IMR-90 (cell line): ENCODE measurements at regions of chr16 and their contacts with region 1.

Region 1: DNA sequence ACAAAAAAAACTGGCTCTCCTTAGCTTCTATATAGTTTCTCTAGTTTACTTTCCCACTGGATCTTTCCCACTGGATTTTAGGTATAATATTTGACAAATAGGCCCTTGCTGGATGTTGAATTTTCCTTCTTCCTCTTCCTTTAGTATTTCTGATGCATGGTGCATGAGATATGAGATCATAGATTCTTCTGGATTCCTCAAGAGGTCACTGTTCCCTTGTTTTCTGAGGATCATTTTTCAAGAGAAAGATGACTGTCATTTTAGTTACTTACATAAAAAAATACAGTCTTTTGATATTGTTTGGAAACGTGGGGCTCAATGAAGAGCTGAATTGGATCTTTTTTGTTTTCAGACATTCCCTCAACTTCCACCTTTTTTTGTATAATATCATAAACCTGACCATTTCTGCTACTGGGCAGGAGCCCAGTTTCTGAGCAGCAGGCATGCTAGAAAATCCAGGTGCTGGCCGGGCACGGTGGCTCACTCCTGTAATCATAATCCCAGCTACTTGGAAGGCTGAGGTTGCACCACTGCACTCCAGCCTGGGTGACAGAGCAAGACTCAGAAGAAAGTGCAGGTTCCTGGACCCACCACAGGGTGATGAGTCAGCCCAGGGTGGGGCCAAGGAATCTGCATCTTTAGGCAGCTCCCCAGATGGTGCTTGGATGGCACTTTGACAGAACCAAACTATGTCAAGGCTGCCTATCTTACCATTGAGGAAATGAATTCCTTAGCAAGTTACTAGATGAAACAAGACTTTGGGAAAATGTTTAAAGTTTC is 70.3 kb downstream of the SDR42E1 start:
- DNase-seq: peak; percentile 64
- ATAC-seq: peak; percentile 61
- H3K4me3 ChIP-seq: no peak overlapping the region
- H3K27ac ChIP-seq: no peak overlapping the region
- H3K4me1 ChIP-seq: peaks cover 3% of the 10 kb centered on the region
- H3K27me3 ChIP-seq: peaks cover 13% of the 10 kb centered on the region
- CTCF ChIP-seq: peak; percentile 60
- POLR2A ChIP-seq: no peak
- RAD21 ChIP-seq: peak; percentile 65

Region 2: DNA sequence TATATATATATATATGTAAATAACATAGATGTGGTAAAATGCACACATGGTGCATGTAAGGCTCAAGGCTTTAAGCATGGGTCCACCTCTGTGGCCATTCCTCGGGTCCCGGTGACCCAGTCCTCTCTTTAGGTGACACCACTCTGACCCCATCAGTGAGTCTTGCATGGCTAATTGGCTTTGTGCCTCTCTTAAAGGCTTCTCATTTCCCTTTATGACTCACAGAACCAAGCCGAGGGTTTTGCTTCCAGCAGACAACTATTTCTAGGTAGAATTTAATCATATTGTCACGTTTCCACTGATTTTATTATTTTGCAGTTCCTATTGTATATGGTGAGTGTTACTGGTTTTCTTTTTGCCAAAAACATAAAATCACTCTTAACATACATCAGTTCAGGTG is 102.2 kb before region 1 on chr16:
- CTCF ChIA-PET with region 1: no interaction called
- POLR2A ChIA-PET with region 1: no interaction called
- dilution Hi-C with region 1: no loop called
- in situ Hi-C with region 1: no loop called
- intact Hi-C with region 1: no loop called
- DNase-seq: peak; percentile 9
- ATAC-seq: no peak
- H3K4me3 ChIP-seq: no peak overlapping the region
- H3K27ac ChIP-seq: no peak overlapping the region
- H3K4me1 ChIP-seq: no peaks in the 10 kb centered on the region
- H3K27me3 ChIP-seq: peaks cover 3% of the 10 kb centered on the region; the same call in 1 of the 2 replicates
- CTCF ChIP-seq: no peak
- POLR2A ChIP-seq: no peak
- RAD21 ChIP-seq: no peak

Region 3: DNA sequence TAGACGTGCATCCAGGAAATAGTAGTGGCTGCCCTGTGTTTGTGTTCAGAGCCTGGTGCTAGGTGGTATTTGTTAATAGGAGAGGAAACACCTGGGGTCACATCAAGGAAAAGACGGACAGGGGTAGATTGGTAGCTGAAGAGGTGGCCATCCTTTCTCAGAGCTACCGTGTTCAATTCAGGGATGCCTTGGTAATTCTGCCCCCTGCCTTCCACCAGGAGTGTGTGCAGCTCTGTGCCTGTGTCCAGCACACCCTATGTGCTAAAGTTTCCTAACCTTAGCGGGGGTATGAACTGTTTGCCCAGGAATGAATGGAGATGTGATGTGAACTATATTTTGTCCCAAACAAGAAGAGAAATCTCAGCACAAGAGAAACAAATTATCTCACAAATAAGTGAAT is 403.2 kb after region 1 on chr16:
- CTCF ChIA-PET with region 1: no interaction called
- POLR2A ChIA-PET with region 1: no interaction called
- dilution Hi-C with region 1: no loop called
- in situ Hi-C with region 1: no loop called
- intact Hi-C with region 1: loop called (anchors 1 kb)
- DNase-seq: no peak
- ATAC-seq: peak; percentile 54; the same call in 1 of the 2 replicates
- H3K4me3 ChIP-seq: no peak overlapping the region
- H3K27ac ChIP-seq: no peak overlapping the region
- H3K4me1 ChIP-seq: no peaks in the 10 kb centered on the region
- H3K27me3 ChIP-seq: no peaks in the 10 kb centered on the region
- CTCF ChIP-seq: no peak
- POLR2A ChIP-seq: no peak
- RAD21 ChIP-seq: no peak

Region 4: DNA sequence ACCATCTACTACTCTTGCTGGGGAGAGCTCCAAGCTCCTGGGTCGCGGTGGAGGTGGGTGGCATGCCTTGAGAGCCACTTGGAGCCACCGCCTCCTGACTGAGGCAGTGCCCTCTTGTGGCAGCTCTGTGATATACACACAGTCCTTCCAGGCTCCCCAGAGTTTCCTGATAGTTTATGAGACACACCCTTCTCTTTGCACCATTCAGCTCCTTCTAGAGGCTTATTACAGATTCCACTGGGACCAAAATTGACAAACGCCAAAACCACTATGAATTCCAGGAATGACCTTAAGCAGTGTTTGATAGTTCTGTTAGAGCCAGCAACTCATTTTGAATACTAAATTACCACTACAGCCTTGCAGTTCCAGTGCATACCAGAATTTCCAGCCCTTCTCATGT is 515.7 kb after region 1 on chr16:
- CTCF ChIA-PET with region 1: no interaction called
- POLR2A ChIA-PET with region 1: no interaction called
- dilution Hi-C with region 1: no loop called
- in situ Hi-C with region 1: no loop called
- intact Hi-C with region 1: loop called (anchors 5 kb)
- DNase-seq: peak; percentile 36
- ATAC-seq: peak; percentile 93
- H3K4me3 ChIP-seq: no peak overlapping the region
- H3K27ac ChIP-seq: no peak overlapping the region
- H3K4me1 ChIP-seq: no peaks in the 10 kb centered on the region
- H3K27me3 ChIP-seq: peaks cover 1% of the 10 kb centered on the region
- CTCF ChIP-seq: peak; percentile 61
- POLR2A ChIP-seq: no peak
- RAD21 ChIP-seq: peak; percentile 40; the same call in 1 of the 2 replicates